GM13977 (cell line): ENCODE measurements at regions of chr20 and their contacts with region 1.

Region 1: DNA sequence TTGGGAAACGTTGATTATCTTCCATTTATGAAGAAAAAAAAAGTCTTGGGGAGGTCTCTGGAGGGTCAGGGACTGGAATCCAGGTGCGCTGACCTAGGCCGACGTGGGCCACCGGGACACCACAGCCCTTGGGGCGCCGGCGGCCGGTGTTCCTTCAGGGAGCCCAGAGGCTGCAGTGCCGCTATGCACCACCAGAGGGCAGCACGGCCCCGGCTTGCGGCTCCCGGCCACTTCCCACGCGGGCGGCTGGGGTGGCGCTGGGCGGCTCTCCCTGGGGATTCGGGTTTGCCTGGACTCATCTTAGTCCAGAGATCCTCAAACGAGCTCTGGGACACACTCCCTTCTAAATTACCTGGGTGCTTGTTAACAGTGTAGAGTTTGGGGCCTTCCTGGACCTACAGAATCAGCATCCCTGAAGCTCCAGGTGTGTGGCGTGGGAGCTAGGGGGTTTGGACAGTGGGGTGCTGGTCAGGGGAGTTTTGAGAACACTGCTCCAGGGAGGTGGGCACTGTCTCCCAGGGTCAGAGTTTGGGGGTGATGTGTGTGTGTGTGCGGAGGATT is 23.0 kb upstream of the GTSF1L start:
- DNase-seq: peak; percentile 77
- CTCF ChIP-seq: peak; percentile 99

Region 2: GRCh38 chr20:43495388-43495787 is 254.4 kb before region 1 on chr20:
- in situ Hi-C with region 1: no loop called
- DNase-seq: no peak
- CTCF ChIP-seq: no peak

Region 3: DNA sequence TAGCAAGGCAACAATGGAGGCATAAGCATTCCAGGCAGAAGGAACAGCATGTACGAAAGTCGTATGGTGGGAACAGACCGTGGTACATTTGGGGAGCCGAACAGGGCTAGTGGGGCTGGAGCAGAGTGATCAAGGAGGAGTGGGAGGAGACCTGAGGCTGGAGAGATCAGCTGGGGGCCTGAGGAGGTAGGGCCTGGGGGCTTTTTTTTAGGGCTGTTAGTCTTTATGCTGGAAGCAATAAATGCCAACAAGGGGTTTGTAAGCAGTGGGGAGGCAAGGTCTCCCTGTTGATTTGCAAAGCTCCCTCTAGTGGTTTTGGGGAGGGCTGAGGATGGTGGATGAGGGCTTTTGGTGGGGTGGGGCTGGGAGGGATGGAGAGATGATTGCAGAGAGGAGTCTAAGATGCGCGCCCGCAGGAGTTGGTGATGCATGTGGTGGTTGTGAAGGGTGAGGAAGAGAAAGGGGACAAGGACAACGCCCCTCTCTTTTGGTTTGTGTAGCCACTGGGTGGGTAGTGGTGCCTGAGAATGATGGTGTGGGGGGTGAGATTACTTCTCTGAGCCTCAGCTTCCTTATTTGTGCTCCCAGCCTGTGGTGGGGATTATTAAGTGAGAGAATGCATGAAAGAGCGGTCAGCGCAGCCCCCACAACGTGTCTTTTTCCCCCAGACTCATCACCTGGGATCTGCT is 90.7 kb after region 1 on chr20:
- in situ Hi-C with region 1: loop called (anchors 10 kb)
- DNase-seq: peak; percentile 74
- CTCF ChIP-seq: peak; percentile 68

Region 4: DNA sequence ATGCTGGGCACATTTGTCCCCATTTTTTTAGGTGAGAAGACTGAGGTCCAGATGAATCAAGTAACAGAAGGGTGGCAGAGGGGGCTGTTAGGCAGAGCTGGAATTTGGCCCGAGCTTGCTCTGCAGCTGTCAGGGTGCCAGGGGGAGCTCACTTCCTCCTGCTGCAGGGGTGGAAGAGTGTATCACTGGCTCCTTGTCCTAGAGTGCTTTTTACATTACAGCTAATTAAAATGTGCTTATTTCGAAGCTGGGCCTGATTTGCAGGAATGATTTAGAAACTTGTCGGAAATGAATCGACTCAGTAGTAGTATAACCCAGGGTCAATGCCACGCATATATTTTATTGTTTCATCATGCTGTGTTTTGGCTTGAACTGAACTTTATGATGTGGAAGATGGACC is 176.0 kb after region 1 on chr20:
- in situ Hi-C with region 1: no loop called
- DNase-seq: no peak
- CTCF ChIP-seq: no peak

Region 5: GRCh38 chr20:44074252-44075151 is 324.7 kb after region 1 on chr20:
- in situ Hi-C with region 1: loop called (anchors 5 kb)
- DNase-seq: no peak
- CTCF ChIP-seq: no peak